ENCODE measurements at regions of chr5 and their contacts with region 1.

Region 1: DNA sequence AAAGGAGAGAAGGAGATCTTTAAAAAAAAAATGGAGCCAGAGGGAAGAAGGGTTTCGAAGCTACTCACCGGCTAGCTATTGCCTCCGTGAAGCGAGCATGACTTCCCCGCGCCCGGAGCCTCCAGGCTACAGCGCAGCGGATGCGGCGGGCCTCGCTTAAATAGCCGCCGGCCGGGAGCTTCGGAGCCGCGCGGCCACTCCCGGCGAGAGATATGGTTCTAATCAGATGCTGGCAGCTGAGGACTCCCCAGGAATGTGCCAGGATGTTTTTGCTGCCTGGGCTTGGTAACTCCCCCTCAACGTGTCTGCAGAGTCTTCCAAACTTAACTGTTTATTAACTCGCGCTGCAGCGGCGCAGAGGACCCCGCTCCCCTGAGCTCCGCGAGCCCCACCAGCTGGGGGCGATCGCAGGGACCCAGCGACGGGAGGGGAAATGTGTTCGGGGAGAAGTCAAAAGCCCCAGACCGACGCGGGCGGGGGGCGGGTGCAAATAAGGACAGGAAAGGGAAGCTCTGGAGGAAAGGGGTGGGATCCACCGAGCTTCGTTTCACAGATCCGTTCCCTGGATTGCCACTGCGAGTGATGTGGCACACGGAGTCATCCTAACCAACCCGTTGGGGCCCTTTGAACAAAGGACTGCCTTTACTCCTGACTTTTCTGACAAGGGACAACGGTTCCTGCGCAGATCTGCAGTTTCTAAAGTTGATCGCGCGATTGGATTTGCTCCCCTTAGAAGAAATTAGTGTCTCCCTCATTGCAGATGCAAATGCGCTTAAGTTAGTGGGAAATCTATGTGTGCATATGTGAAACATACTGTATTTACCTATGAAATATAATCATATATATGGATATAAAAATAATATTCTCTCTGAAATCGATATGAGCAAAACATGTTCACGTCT is at the start of gene DAB2:
- DNase-seq: peak; percentile 94
- ATAC-seq: peak; percentile 81
- H3K4me3 ChIP-seq: peak within 1 kb of the TSS; percentile 87
- H3K27ac ChIP-seq: peak within 1 kb of the TSS; percentile 65
- H3K4me1 ChIP-seq: peaks cover 48% of the 10 kb centered on the region
- H3K27me3 ChIP-seq: no peaks in the 10 kb centered on the region
- CTCF ChIP-seq: peak; percentile 81
- total RNA-seq, gene DAB2: 11.8 and 14.1 TPM in 2 replicates

Region 2: GRCh38 chr5:39058178-39058921 is 366.6 kb before region 1 on chr5:
- CTCF ChIA-PET with region 1: no interaction called
- POLR2A ChIA-PET with region 1: interaction called, 10 read pairs
- intact Hi-C with region 1: no loop called
- DNase-seq: no peak
- ATAC-seq: no peak
- H3K4me3 ChIP-seq: 0 out of 2 replicates have a peak overlapping the region, but pooled peaks have one; percentile 5
- H3K27ac ChIP-seq: no peak overlapping the region
- H3K4me1 ChIP-seq: peaks cover 8% of the 10 kb centered on the region; the same call in 1 of the 2 replicates
- H3K27me3 ChIP-seq: no peaks in the 10 kb centered on the region
- CTCF ChIP-seq: no peak

Region 3: DNA sequence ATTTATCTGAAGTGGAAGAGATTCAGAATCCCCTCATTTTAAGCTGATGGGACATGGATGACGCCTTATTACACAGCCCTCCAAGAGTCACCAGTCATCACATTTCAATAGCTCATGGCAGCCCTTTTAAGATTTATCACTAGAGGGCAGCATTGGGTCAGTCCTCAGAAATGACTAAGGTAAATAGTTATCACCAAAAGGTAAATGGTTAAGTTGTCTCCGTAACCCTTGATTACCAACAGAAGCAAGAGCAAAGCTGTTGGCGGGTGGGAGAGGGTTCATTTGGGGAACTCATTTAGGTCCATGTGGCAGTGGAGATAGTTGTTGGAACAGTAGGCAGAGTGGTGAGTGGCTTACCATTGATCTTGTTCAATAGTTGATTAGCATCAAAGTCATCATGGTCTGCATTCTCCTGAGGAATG is 48.7 kb before region 1 on chr5:
- CTCF ChIA-PET with region 1: interaction called, 16 read pairs
- POLR2A ChIA-PET with region 1: no interaction called
- intact Hi-C with region 1: loop called (anchors 1 kb)
- DNase-seq: peak; percentile 94
- ATAC-seq: peak; percentile 77
- H3K4me3 ChIP-seq: no peak overlapping the region
- H3K27ac ChIP-seq: no peak overlapping the region
- H3K4me1 ChIP-seq: no peaks in the 10 kb centered on the region
- H3K27me3 ChIP-seq: no peaks in the 10 kb centered on the region
- CTCF ChIP-seq: peak; percentile 98

Region 4: GRCh38 chr5:39411051-39411450 is 13.9 kb before region 1 on chr5:
- CTCF ChIA-PET with region 1: interaction called, 5 read pairs
- POLR2A ChIA-PET with region 1: interaction called, 3 read pairs
- intact Hi-C with region 1: loop called (anchors 1 kb)
- DNase-seq: peak; percentile 85
- ATAC-seq: peak; percentile 91
- H3K4me3 ChIP-seq: 0 out of 2 replicates have a peak overlapping the region, but pooled peaks have one; percentile 14
- H3K27ac ChIP-seq: peak overlapping the region; percentile 61
- H3K4me1 ChIP-seq: peaks cover 28% of the 10 kb centered on the region
- H3K27me3 ChIP-seq: no peaks in the 10 kb centered on the region
- CTCF ChIP-seq: no peak

Region 5: GRCh38 chr5:39447968-39448367 is 23.0 kb after region 1 on chr5:
- CTCF ChIA-PET with region 1: interaction called, 4 read pairs
- POLR2A ChIA-PET with region 1: no interaction called
- intact Hi-C with region 1: loop called (anchors 2 kb)
- DNase-seq: peak; percentile 96
- ATAC-seq: peak; percentile 92
- H3K4me3 ChIP-seq: no peak overlapping the region
- H3K27ac ChIP-seq: peak overlapping the region; percentile 92
- H3K4me1 ChIP-seq: peaks cover 44% of the 10 kb centered on the region
- H3K27me3 ChIP-seq: no peaks in the 10 kb centered on the region
- CTCF ChIP-seq: no peak

Region 6: GRCh38 chr5:39513236-39513635 is 88.2 kb after region 1 on chr5:
- CTCF ChIA-PET with region 1: interaction called, 3 read pairs
- POLR2A ChIA-PET with region 1: no interaction called
- intact Hi-C with region 1: loop called (anchors 5 kb)
- DNase-seq: peak; percentile 89
- ATAC-seq: peak; percentile 86
- H3K4me3 ChIP-seq: no peak overlapping the region
- H3K27ac ChIP-seq: peak overlapping the region; percentile 4; the same call in 1 of the 2 replicates
- H3K4me1 ChIP-seq: peaks cover 39% of the 10 kb centered on the region
- H3K27me3 ChIP-seq: no peaks in the 10 kb centered on the region
- CTCF ChIP-seq: no peak

Region 7: DNA sequence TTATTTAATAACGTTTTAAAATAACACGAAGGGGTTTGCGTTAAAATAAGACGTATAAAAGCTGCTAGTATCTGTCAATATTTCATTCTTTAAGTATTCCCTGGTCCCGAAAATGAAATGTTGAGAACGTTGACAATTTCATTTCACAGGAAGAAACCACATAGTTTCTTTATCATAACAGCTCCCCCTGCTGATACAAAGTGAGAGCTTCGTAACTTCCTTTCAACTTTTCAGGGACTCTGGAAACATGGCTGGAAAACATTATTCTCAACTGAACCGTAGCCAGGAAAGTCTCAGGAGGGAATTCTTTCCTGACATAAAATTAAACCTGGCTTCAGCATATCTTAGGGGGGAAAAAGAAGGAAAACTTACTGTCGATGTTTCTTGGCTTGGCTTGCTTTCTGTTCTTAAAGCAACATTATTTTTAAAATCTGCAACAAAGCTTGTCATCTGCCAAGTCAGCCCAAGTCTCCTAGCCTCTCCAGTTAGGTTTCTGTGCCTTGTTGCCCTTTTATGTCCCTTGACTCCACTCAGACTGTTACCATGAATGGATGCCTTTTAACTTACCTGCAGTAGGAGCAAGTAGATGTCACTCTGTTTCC is 122.7 kb after region 1 on chr5:
- CTCF ChIA-PET with region 1: interaction called, 32 read pairs
- POLR2A ChIA-PET with region 1: no interaction called
- intact Hi-C with region 1: loop called (anchors 1 kb)
- DNase-seq: peak; percentile 92
- ATAC-seq: peak; percentile 71
- H3K4me3 ChIP-seq: peak overlapping the region; percentile 25; the same call in 1 of the 2 replicates
- H3K27ac ChIP-seq: no peak overlapping the region
- H3K4me1 ChIP-seq: peaks cover 4% of the 10 kb centered on the region; the same call in 1 of the 2 replicates
- H3K27me3 ChIP-seq: no peaks in the 10 kb centered on the region
- CTCF ChIP-seq: peak; percentile 94